ENCODE measurements at regions of chr6 and their contacts with region 1.

Region 1: GRCh38 chr6:166402582-166403277 is 20.0 kb upstream of the MPC1 start:
- DNase-seq: no peak
- H3K4me3 ChIP-seq: no peak overlapping the region
- H3K4me3 Mint-ChIP-seq: no peak overlapping the region
- H3K27ac ChIP-seq: no peak overlapping the region
- H3K27ac Mint-ChIP-seq: peak overlapping the region in 3 of 8 donors; percentile 50 to 84 (median 84)
- H3K4me1 ChIP-seq: no peaks in the 10 kb centered on the region
- H3K4me1 Mint-ChIP-seq: peaks cover 8 to 9% (median 9%) of the 10 kb centered on the region in 3 donors
- H3K27me3 ChIP-seq: no peaks in the 10 kb centered on the region
- H3K27me3 Mint-ChIP-seq: peaks cover 0 to 8% of the 10 kb centered on the region in 2 donors

Region 2: GRCh38 chr6:166275714-166276166 is 127.0 kb before region 1 on chr6:
- CTCF ChIA-PET with region 1: interaction called, 32 read pairs
- POLR2A ChIA-PET with region 1: no interaction called
- DNase-seq: peak; percentile 69 to 80 (median 76)
- H3K4me3 ChIP-seq: no peak overlapping the region
- H3K4me3 Mint-ChIP-seq: peak overlapping the region in 1 of 7 donors; percentile 36
- H3K27ac ChIP-seq: no peak overlapping the region
- H3K27ac Mint-ChIP-seq: no peak overlapping the region
- H3K4me1 ChIP-seq: no peaks in the 10 kb centered on the region
- H3K4me1 Mint-ChIP-seq: peaks cover 5 to 9% (median 5%) of the 10 kb centered on the region in 3 donors
- H3K27me3 ChIP-seq: no peaks in the 10 kb centered on the region
- H3K27me3 Mint-ChIP-seq: peaks cover 8 to 13% of the 10 kb centered on the region in 2 donors

Region 3: GRCh38 chr6:166281104-166281503 is 121.6 kb before region 1 on chr6:
- CTCF ChIA-PET with region 1: interaction called, 32 read pairs
- POLR2A ChIA-PET with region 1: no interaction called
- DNase-seq: no peak
- H3K4me3 ChIP-seq: no peak overlapping the region
- H3K4me3 Mint-ChIP-seq: no peak overlapping the region
- H3K27ac ChIP-seq: no peak overlapping the region
- H3K27ac Mint-ChIP-seq: no peak overlapping the region
- H3K4me1 ChIP-seq: no peaks in the 10 kb centered on the region
- H3K4me1 Mint-ChIP-seq: peaks cover 0 to under 1% (median 0%) of the 10 kb centered on the region in 3 donors
- H3K27me3 ChIP-seq: no peaks in the 10 kb centered on the region
- H3K27me3 Mint-ChIP-seq: peaks cover 7 to 29% of the 10 kb centered on the region in 2 donors

Region 4: GRCh38 chr6:166313255-166314070 is 89.3 kb before region 1 on chr6:
- CTCF ChIA-PET with region 1: interaction called, 60 read pairs
- POLR2A ChIA-PET with region 1: no interaction called
- DNase-seq: peak in 4 of 5 donors; percentile 20 to 65 (median 35)
- H3K4me3 ChIP-seq: no peak overlapping the region
- H3K4me3 Mint-ChIP-seq: no peak overlapping the region
- H3K27ac ChIP-seq: no peak overlapping the region
- H3K27ac Mint-ChIP-seq: no peak overlapping the region
- H3K4me1 ChIP-seq: peaks cover 3% of the 10 kb centered on the region
- H3K4me1 Mint-ChIP-seq: peaks cover 0 to 4% (median 0%) of the 10 kb centered on the region in 3 donors
- H3K27me3 ChIP-seq: peaks cover 11% of the 10 kb centered on the region
- H3K27me3 Mint-ChIP-seq: peaks cover 19% of the 10 kb centered on the region in 2 donors

Region 5: GRCh38 chr6:166382933-166383801 is 19.6 kb before region 1 on chr6 and contains the start of gene MPC1:
- CTCF ChIA-PET with region 1: interaction called, 21 read pairs
- POLR2A ChIA-PET with region 1: no interaction called
- DNase-seq: peak; percentile 91 to 96 (median 93)
- H3K4me3 ChIP-seq: peak within 1 kb of the TSS; percentile 82
- H3K4me3 Mint-ChIP-seq: peak within 1 kb of the TSS; percentile 90 to 98 (median 94)
- H3K27ac ChIP-seq: peak within 1 kb of the TSS; percentile 82
- H3K27ac Mint-ChIP-seq: peak within 1 kb of the TSS; percentile 82 to 97 (median 88)
- H3K4me1 ChIP-seq: peaks cover 6% of the 10 kb centered on the region
- H3K4me1 Mint-ChIP-seq: peaks cover 12 to 19% (median 18%) of the 10 kb centered on the region in 3 donors
- H3K27me3 ChIP-seq: no peaks in the 10 kb centered on the region
- H3K27me3 Mint-ChIP-seq: peaks cover 0 to 3% of the 10 kb centered on the region in 2 donors
- total RNA-seq, gene MPC1: 36.3 to 39.3 TPM

Region 6: GRCh38 chr6:166419286-166419685 is 16.6 kb after region 1 on chr6:
- CTCF ChIA-PET with region 1: interaction called, 24 read pairs
- POLR2A ChIA-PET with region 1: no interaction called
- DNase-seq: peak; percentile 34 to 83 (median 57)
- H3K4me3 ChIP-seq: no peak overlapping the region
- H3K4me3 Mint-ChIP-seq: peak overlapping the region; percentile 21 to 88 (median 75)
- H3K27ac ChIP-seq: peak overlapping the region; percentile 25
- H3K27ac Mint-ChIP-seq: peak overlapping the region; percentile 95 to 100 (median 98)
- H3K4me1 ChIP-seq: peaks cover 72% of the 10 kb centered on the region
- H3K4me1 Mint-ChIP-seq: peaks cover 73 to 82% (median 78%) of the 10 kb centered on the region in 3 donors
- H3K27me3 ChIP-seq: no peaks in the 10 kb centered on the region
- H3K27me3 Mint-ChIP-seq: peaks cover 0 to 7% of the 10 kb centered on the region in 2 donors